ENCODE measurements at regions of chr5 and their contacts with region 1.

Region 1: DNA sequence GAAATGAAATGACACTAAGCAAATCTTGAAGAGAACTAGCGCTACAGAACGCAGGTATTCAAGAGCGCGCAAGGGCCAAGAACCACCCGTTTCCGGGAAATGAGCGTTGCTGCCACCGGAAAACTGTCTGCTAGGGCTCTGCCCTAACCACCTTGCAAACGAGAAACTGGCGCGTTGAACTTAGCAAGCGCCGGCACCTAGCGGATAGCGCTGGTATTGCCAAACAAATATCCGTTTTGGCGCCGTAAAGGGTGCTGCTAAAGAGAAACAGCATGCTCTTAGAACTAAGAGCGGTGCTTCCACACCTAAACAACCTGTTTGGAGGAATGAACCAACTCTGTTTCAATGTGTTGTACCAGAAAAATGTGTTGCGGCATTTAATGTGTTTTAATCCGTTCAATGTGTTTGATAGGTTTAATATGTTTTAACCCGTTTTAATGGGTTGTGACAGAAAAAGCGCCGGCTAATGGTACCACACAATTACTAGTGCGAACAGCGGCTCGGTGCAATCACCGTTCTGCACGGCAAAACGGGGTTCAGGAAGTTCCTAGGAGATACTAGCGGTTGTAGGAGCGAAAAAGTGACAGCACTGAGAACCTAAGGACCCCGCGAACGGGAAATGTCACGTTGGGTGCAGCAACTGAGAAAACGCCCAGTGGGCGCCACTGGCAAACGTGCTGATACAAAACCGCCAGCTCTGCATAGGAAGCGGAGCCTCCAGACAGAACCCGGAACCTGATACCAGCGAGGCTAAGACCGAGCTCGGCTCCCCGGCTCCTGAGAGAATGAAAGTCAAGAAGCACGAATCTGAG is at the start of gene ANXA2R:
- DNase-seq: peak; percentile 85 to 96 (median 88)
- H3K4me3 ChIP-seq: peak within 1 kb of the TSS in 2 of 4 donors; percentile 54 to 68
- H3K27ac ChIP-seq: peak within 1 kb of the TSS; percentile 89 to 99 (median 97)
- H3K4me1 ChIP-seq: no peaks in the 10 kb centered on the region
- H3K27me3 ChIP-seq: no peaks in the 10 kb centered on the region
- CTCF ChIP-seq: peak; percentile 76 to 87 (median 82)
- POLR2A ChIP-seq: no peak
- total RNA-seq, gene ANXA2R: 0.30 to 3.7 (median 2.7) TPM

Region 2: DNA sequence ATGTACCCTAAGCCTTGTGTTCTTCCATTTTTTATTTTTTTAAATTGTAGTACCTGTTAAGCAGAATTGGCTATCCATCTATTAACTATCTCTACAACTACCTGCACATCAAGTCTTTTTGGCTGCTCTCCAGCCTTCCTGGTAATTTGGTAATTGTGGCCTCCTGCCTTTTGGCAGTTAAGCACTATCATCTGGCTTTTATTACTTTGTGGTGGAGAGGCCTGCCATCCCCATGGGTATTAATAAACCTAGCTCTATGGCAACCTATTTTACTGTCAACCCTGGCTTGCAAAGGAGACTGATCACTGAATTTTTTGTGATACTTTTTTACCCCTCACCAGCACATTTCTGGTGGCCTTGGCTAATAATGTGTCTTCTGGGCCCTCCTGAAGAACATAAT is 249.3 kb before region 1 on chr5:
- intact Hi-C with region 1: no loop called
- DNase-seq: no peak
- H3K4me3 ChIP-seq: no peak overlapping the region
- H3K27ac ChIP-seq: no peak overlapping the region
- H3K4me1 ChIP-seq: no peaks in the 10 kb centered on the region
- H3K27me3 ChIP-seq: no peaks in the 10 kb centered on the region
- CTCF ChIP-seq: no peak
- POLR2A ChIP-seq: no peak

Region 3: DNA sequence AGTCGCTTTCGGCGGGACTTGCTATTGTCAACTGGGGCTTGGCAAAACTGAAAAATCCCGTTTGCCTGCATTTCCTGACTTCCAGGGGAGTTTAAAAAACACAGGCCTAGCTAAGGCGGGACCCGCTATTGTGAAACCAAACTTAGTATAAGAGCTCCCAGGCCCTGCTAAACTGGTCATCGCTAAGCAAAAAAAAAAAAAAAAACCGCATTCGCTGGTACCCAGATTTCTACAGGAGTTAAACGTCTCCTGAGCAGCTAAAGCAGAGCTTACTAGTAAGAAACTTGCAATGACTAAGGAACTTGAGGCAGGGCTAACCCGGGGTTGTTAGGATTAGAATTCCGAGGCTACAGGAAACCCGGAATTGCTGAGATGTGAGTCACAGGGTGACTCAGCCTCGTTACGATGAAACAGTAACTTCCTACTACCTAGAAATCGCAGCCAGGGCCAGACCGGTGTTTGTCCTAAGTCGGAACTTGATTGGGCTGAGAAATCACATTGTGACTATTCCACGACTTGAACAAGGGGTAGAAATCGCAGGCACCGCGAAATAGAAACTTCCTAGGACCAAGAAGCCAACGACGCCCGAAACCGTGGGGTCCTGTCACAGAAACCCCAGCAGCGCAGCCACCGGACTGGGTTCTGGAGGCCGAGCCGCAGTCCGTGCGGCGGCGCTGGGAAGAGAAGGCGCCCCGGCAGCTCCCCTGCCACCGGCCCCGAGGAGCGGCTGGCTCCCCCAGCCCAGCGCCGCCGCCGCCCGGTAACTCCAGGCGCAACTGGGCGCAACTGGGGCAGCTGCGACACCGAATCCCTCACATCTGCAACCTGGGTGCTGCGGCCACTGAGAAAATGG is 89.8 kb before region 1 on chr5:
- intact Hi-C with region 1: loop called in 1 of 2 experiments (anchors 2 kb)
- DNase-seq: peak; percentile 63 to 92 (median 85)
- H3K4me3 ChIP-seq: peak overlapping the region; percentile 49 to 90 (median 76)
- H3K27ac ChIP-seq: peak overlapping the region; percentile 82 to 93 (median 90)
- H3K4me1 ChIP-seq: peaks cover 0 to 20% of the 10 kb centered on the region in 2 donors
- H3K27me3 ChIP-seq: peaks cover 4% of the 10 kb centered on the region
- CTCF ChIP-seq: no peak
- POLR2A ChIP-seq: peak; percentile 39 to 72

Region 4: DNA sequence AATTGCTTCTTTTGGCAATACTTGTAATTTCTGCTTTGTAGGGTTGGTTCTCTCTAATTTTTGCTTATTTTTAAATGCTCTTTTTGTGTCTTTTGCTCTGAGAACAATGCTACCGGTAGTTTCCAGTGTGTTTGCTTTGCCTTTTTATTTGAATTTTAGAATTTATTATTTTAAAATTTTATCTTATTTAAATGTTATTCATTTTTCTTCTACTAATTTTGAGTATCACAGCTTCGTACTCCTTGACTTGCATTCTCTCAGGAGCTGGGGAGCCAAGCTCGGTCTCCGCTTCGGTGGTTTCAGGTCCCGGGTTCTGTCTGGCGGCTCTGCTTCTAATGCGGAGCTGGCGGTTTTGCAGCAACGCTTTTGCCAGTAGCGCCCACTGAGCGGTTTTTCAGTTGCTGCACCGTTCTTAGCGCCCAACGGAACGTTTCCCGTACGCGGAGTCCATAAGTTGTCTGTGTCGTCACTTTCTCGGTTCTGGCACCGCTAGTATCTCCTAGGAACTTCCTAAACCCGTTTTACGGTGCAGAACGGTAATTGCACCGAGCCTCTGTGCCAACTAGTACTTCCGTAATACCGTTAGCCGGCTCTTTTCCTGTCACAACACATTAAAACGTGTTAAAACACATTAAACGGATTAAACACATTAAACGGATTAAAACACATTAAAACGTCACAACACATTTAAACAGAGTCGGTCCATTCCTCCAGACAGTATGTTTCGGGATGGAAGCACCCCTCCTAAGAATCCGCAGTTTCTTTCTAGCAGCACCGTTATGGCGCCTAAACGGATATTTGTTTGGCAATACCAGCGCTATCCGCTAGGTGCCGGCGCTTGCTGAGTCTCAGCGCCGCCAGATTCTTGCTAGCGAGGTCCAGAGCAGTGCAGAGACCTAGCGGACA is 46.0 kb before region 1 on chr5:
- intact Hi-C with region 1: loop called (anchors 2 to 5 kb)
- DNase-seq: peak; percentile 88 to 96 (median 91)
- H3K4me3 ChIP-seq: peak overlapping the region in 3 of 4 donors; percentile 22 to 61 (median 30)
- H3K27ac ChIP-seq: peak overlapping the region; percentile 87 to 98 (median 94)
- H3K4me1 ChIP-seq: no peaks in the 10 kb centered on the region
- H3K27me3 ChIP-seq: no peaks in the 10 kb centered on the region
- CTCF ChIP-seq: peak; percentile 77 to 95 (median 90)
- POLR2A ChIP-seq: peak in 1 of 2 donors; percentile 33

Region 5: DNA sequence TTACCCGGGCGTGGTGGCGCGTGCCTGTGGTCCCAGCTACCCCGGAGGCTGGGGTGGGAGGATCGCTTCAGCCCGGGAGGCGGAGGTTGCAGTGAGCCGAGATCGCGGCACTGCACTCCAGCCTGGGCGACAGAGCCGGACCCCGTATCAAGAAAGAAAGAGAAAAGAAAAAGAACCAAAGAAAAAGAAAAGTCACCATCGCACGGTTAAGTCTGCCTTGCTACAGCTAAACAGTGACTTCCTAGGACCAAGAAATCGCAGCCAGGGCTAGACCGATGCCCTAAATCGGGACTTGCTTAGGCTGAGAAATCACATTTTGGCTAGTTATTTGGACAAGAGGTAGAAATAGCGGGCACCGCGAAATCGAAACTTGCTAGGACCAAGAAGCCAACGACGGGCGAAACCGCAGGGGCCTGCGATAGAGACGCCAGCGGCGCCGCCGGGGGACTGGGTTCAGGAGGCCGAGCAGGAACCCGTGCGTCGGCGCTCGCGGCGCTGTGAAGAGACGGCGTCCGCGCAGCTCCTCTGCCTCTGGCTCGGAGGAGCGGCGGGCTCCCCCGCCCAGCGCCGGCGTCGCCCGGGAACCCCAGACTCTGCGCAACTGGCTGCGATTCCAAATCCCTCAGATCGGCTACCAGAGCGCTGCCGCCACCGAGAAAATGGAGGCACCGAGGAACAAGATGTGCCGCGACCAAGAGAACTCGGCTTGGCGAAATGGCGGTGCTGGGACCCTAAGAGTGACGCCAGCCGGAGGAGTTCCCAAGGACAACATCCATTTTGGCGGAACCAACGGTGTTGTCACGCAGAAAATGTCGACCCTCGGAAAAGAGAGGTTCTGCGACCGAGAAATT is 25.7 kb after region 1 on chr5:
- intact Hi-C with region 1: loop called in 1 of 2 experiments (anchors 2 kb)
- DNase-seq: peak; percentile 74 to 87 (median 77)
- H3K4me3 ChIP-seq: peak overlapping the region; percentile 67 to 85 (median 77)
- H3K27ac ChIP-seq: peak overlapping the region; percentile 96 to 99 (median 98)
- H3K4me1 ChIP-seq: peaks cover 19 to 30% of the 10 kb centered on the region in 2 donors
- H3K27me3 ChIP-seq: no peaks in the 10 kb centered on the region
- CTCF ChIP-seq: no peak
- POLR2A ChIP-seq: peak; percentile 49 to 71

Measured in adrenal gland (tissue), 19 donors.